Dorsolateral prefrontal cortex (tissue), 120 donors: ENCODE measurements at regions of chr14 and their contacts with region 1.

Region 1: GRCh38 chr14:22918804-22919600 is at the start of gene RBM23:
- DNase-seq: peak; percentile 91 to 99 (median 97)
- H3K4me3 ChIP-seq: peak within 1 kb of the TSS; percentile 60 to 100 (median 90)
- H3K27ac ChIP-seq: peak within 1 kb of the TSS; percentile 93 to 100 (median 99)
- H3K27me3 ChIP-seq: no peaks in the 10 kb centered on the region
- CTCF ChIP-seq: peak in 25 of 56 donors; percentile 9 to 52 (median 23)
- total RNA-seq, gene RBM23: 54.8 to 96.7 (median 72.6) TPM

Region 2: DNA sequence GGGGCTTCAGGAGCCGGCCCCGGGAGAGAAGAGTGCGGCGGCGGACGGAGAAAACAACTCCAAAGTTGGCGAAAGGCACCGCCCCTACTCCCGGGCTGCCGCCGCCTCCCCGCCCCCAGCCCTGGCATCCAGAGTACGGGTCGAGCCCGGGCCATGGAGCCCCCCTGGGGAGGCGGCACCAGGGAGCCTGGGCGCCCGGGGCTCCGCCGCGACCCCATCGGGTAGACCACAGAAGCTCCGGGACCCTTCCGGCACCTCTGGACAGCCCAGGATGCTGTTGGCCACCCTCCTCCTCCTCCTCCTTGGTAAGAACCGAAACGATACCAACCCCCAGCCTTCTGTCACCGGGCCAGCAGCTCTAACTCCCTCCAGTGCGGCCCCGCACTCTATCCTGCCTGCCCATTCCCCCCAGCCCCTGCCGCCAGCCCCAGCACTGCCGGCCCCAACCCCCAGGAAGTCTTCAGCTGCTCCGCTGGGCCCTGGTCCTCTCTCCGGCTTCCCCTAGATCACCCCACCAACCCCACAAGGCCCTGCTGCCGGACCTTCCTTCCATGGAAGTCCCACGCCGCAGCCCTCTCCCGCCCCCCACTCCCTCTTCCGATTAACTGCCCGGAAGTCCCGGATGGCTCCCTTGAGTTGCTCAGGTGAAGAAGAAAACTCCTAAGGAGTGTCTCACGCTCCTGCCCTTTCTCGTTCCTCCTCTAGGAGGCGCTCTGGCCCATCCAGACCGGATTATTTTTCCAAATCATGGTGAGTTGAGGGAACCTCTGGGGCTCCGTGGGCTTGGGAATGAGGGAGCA is 46.8 kb before region 1 on chr14:
- intact Hi-C with region 1: loop called in 1 of 2 experiments (anchors 5 kb)
- DNase-seq: peak in 8 of 10 donors; percentile 64 to 75 (median 72)
- H3K4me3 ChIP-seq: peak overlapping the region; percentile 61 to 98 (median 90)
- H3K27ac ChIP-seq: peak overlapping the region; percentile 77 to 99 (median 95)
- H3K27me3 ChIP-seq: peaks cover 0 to 4% (median 0%) of the 10 kb centered on the region in 45 donors
- CTCF ChIP-seq: peak; percentile 63 to 88 (median 79)

Region 3: GRCh38 chr14:22929104-22929847 is 10.3 kb after region 1 on chr14 and contains the start of gene PRMT5:
- intact Hi-C with region 1: loop called (anchors 1 kb)
- DNase-seq: peak; percentile 89 to 100 (median 99)
- H3K4me3 ChIP-seq: peak within 1 kb of the TSS; percentile 59 to 97 (median 86)
- H3K27ac ChIP-seq: peak within 1 kb of the TSS; percentile 68 to 97 (median 92)
- H3K27me3 ChIP-seq: no peaks in the 10 kb centered on the region
- CTCF ChIP-seq: peak in 28 of 56 donors; percentile 9 to 53 (median 31)
- total RNA-seq, gene PRMT5: 35.6 to 70.9 (median 49.6) TPM